IMR-90 (cell line): ENCODE measurements at regions of chr4 and their contacts with region 1.

Region 1: GRCh38 chr4:46931981-46932380 is 22.9 kb upstream of the COX7B2 start:
- DNase-seq: peak; percentile 70
- ATAC-seq: peak; percentile 91
- H3K4me3 ChIP-seq: no peak overlapping the region
- H3K27ac ChIP-seq: no peak overlapping the region
- H3K4me1 ChIP-seq: peaks cover 1% of the 10 kb centered on the region; the same call in 1 of the 2 replicates
- H3K27me3 ChIP-seq: no peaks in the 10 kb centered on the region
- CTCF ChIP-seq: peak; percentile 81
- POLR2A ChIP-seq: no peak
- RAD21 ChIP-seq: peak; percentile 87

Region 2: DNA sequence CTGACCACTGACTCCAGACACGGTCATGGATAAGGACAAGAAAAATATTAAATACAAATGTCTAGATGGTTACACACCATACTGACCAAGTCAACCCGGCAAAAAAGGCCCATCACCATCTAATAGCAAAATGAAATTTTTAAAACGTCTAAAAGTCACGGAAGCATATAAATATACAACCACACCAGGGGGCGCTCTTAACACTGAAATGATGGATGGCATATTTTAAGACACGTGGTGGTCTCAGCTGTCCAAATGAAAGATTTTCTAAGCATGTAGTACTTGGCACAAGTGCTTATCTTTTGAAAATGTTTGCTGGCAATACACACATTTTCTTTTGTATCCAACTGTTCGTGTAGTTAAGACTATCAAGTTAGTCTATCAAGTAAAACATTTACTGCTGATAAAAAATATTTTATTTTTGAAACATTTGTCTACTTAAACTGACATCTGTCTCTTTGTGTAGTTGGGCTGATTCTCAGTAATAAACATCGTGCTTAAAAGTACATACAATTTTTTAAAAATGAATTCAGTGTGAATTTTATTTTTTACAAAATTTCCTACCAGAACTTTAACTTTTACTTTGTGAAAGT is 87.6 kb before region 1 on chr4:
- CTCF ChIA-PET with region 1: interaction called, 4 read pairs
- POLR2A ChIA-PET with region 1: no interaction called
- dilution Hi-C with region 1: no loop called
- in situ Hi-C with region 1: no loop called
- intact Hi-C with region 1: loop called (anchors 5 kb)
- DNase-seq: peak; percentile 61
- ATAC-seq: no peak
- H3K4me3 ChIP-seq: no peak overlapping the region
- H3K27ac ChIP-seq: no peak overlapping the region
- H3K4me1 ChIP-seq: no peaks in the 10 kb centered on the region; the same call in 1 of the 2 replicates
- H3K27me3 ChIP-seq: no peaks in the 10 kb centered on the region; the same call in 1 of the 2 replicates
- CTCF ChIP-seq: peak; percentile 75
- POLR2A ChIP-seq: no peak
- RAD21 ChIP-seq: peak; percentile 73

Region 3: DNA sequence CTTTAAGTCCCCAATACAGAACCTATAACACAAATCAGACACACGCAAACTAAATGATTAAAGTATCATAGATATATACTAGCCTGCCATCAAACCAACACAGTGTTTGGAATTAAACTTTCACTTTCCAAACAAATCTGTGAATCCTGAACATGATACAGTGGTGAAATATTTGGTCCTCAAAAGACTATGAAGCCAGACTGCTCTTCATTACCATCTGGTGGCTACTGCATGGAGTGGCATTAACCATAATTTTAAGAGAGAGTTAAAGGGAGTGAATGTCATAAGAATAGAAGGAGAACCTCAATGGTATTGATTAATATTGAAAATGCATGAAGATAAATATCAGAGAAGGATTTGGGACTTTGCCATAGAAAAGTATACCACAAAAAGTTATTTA is 70.6 kb after region 1 on chr4:
- CTCF ChIA-PET with region 1: no interaction called
- POLR2A ChIA-PET with region 1: no interaction called
- dilution Hi-C with region 1: no loop called
- in situ Hi-C with region 1: no loop called
- intact Hi-C with region 1: loop called (anchors 1 kb)
- DNase-seq: peak; percentile 79
- ATAC-seq: peak; percentile 97
- H3K4me3 ChIP-seq: no peak overlapping the region
- H3K27ac ChIP-seq: no peak overlapping the region
- H3K4me1 ChIP-seq: no peaks in the 10 kb centered on the region
- H3K27me3 ChIP-seq: no peaks in the 10 kb centered on the region
- CTCF ChIP-seq: peak; percentile 68
- POLR2A ChIP-seq: no peak
- RAD21 ChIP-seq: peak; percentile 64

Region 4: DNA sequence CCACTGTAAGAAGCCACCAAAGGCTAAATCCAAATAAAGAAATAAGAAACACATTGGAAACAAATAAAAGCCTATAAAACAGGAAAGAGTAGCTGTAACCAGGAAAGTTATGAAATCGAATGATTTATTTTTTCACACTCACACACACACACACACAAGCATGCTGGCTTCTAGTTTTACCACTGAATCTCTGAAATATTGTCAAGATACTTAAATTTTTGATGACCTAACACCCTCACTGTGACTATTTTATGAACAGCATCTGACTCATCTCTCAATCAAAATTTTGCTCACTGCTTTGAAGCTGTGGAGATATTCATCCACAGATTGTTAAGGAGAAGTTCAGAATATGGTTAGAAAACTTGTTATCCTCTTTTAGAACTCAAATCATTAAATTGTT is 85.5 kb after region 1 on chr4:
- CTCF ChIA-PET with region 1: no interaction called
- POLR2A ChIA-PET with region 1: no interaction called
- dilution Hi-C with region 1: no loop called
- in situ Hi-C with region 1: no loop called
- intact Hi-C with region 1: no loop called
- DNase-seq: peak; percentile 37
- ATAC-seq: peak; percentile 51
- H3K4me3 ChIP-seq: no peak overlapping the region
- H3K27ac ChIP-seq: no peak overlapping the region
- H3K4me1 ChIP-seq: peaks cover 3% of the 10 kb centered on the region; the same call in 1 of the 2 replicates
- H3K27me3 ChIP-seq: no peaks in the 10 kb centered on the region
- CTCF ChIP-seq: no peak
- POLR2A ChIP-seq: no peak
- RAD21 ChIP-seq: no peak

Region 5: DNA sequence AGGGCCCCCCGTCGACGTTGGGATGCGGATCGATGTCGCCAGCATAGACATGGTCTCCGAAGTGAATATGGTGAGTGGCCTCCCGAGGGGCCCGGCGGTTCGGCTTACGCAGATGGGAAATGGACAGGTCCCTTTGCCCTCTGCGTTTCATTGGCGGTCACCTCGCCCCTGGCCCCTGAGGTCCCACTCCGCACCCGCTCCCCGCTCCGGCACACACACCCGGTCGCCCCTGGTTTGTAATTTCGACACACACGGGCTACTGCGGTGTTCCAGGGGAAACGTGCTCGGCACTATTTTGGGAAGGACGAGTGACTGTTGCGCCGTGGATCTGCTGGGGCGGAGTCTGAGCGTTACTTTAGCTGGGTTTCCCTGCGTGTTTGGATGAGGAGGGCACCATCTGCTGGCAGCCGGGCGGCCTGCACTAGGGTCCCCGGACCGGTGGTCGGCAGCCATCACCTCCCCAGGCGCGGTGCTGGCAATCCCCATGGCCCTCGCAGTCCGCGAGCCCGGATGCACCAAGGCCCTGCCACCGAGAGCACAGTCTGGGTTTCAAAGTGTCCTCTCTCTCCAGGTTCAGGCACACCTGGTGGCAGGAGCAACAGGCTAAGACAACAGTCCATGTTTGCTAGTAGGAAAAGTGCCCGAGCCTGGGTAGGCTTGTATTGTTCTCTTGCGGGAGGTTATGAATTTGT is 100.6 kb after region 1 on chr4:
- CTCF ChIA-PET with region 1: interaction called, 3 read pairs
- POLR2A ChIA-PET with region 1: no interaction called
- dilution Hi-C with region 1: no loop called
- in situ Hi-C with region 1: no loop called
- intact Hi-C with region 1: loop called (anchors 1 kb)
- DNase-seq: peak; percentile 65
- ATAC-seq: peak; percentile 96
- H3K4me3 ChIP-seq: peak overlapping the region; percentile 58
- H3K27ac ChIP-seq: peak overlapping the region; percentile 3; the same call in 1 of the 2 replicates
- H3K4me1 ChIP-seq: no peaks in the 10 kb centered on the region
- H3K27me3 ChIP-seq: no peaks in the 10 kb centered on the region; the same call in 1 of the 2 replicates
- CTCF ChIP-seq: peak; percentile 80
- POLR2A ChIP-seq: no peak
- RAD21 ChIP-seq: peak; percentile 75

Region 6: GRCh38 chr4:47122592-47123291 is 190.8 kb after region 1 on chr4:
- CTCF ChIA-PET with region 1: interaction called, 6 read pairs
- POLR2A ChIA-PET with region 1: interaction called, 4 read pairs
- dilution Hi-C with region 1: no loop called
- in situ Hi-C with region 1: loop called (anchors 5 kb)
- intact Hi-C with region 1: loop called (anchors 2 kb)
- DNase-seq: peak; percentile 81
- ATAC-seq: peak; percentile 81
- H3K4me3 ChIP-seq: no peak overlapping the region
- H3K27ac ChIP-seq: no peak overlapping the region
- H3K4me1 ChIP-seq: peaks cover 2% of the 10 kb centered on the region
- H3K27me3 ChIP-seq: no peaks in the 10 kb centered on the region
- CTCF ChIP-seq: peak; percentile 88
- POLR2A ChIP-seq: no peak
- RAD21 ChIP-seq: peak; percentile 84

Region 7: GRCh38 chr4:47551682-47552081 is 619.7 kb after region 1 on chr4:
- CTCF ChIA-PET with region 1: no interaction called
- POLR2A ChIA-PET with region 1: no interaction called
- dilution Hi-C with region 1: no loop called
- in situ Hi-C with region 1: loop called (anchors 25 kb)
- intact Hi-C with region 1: no loop called
- DNase-seq: peak; percentile 82
- ATAC-seq: peak; percentile 72
- H3K4me3 ChIP-seq: no peak overlapping the region
- H3K27ac ChIP-seq: no peak overlapping the region; the same call in 1 of the 2 replicates
- H3K4me1 ChIP-seq: peaks cover 5% of the 10 kb centered on the region
- H3K27me3 ChIP-seq: no peaks in the 10 kb centered on the region
- CTCF ChIP-seq: no peak
- POLR2A ChIP-seq: no peak
- RAD21 ChIP-seq: no peak

Region 8: DNA sequence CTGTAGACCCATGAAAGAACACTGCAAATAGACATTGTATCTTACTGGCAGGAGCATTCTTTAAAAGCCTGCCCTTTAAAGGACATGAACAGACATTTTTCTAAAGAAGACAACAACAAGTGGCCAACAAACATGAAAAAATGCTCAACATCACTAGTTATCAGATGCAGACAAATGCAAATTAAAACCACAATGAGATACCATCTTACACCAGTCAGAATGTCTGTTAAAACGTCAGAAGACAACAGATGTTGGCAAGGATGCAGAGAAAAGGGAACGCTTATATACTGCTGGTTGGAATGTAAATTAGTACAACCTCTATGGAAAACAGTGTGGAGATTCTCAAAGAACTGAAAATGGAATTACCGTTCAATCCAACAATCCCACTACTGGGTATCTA is 630.3 kb after region 1 on chr4:
- CTCF ChIA-PET with region 1: no interaction called
- POLR2A ChIA-PET with region 1: no interaction called
- dilution Hi-C with region 1: no loop called
- in situ Hi-C with region 1: loop called (anchors 25 kb)
- intact Hi-C with region 1: loop called (anchors 5 kb)
- DNase-seq: no peak
- ATAC-seq: no peak
- H3K4me3 ChIP-seq: no peak overlapping the region
- H3K27ac ChIP-seq: no peak overlapping the region
- H3K4me1 ChIP-seq: peaks cover 2% of the 10 kb centered on the region; the same call in 1 of the 2 replicates
- H3K27me3 ChIP-seq: no peaks in the 10 kb centered on the region
- CTCF ChIP-seq: no peak
- POLR2A ChIP-seq: no peak
- RAD21 ChIP-seq: no peak